Breast epithelium (tissue), 4 donors: ENCODE measurements at regions of chr7 and their contacts with region 1.

Region 1: GRCh38 chr7:68875857-68876256 is 722.4 kb upstream of the AUTS2 start:
- DNase-seq: no peak
- H3K4me3 ChIP-seq: no peak overlapping the region
- H3K27ac ChIP-seq: no peak overlapping the region
- H3K4me1 ChIP-seq: no peaks in the 10 kb centered on the region
- H3K27me3 ChIP-seq: no peaks in the 10 kb centered on the region
- CTCF ChIP-seq: no peak
- POLR2A ChIP-seq: no peak

Region 2: DNA sequence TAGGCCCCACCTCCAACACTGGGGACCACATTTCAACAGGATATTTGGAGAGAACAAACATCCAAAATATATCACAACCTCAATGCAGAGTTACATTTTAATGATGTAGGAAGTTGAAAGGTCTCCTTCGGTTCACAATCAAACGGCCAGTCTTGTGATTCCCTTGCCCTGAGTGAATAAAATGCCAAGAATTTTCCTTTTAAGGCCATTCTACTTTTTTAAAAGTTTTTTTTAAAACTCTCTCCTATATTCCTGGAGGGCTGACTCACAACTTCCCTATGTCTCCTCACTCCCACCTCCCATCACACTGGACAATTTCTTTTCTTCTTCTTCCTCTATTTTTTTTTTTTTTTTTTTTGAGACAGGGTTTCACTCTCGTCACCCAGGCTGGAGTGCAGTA is 28.8 kb after region 1 on chr7:
- intact Hi-C with region 1: loop called (anchors 2 kb)
- DNase-seq: no peak
- H3K4me3 ChIP-seq: no peak overlapping the region
- H3K27ac ChIP-seq: no peak overlapping the region
- H3K4me1 ChIP-seq: no peaks in the 10 kb centered on the region
- H3K27me3 ChIP-seq: no peaks in the 10 kb centered on the region
- CTCF ChIP-seq: no peak
- POLR2A ChIP-seq: no peak

Region 3: GRCh38 chr7:70738151-70738885 is 1862.5 kb after region 1 on chr7:
- intact Hi-C with region 1: no loop called
- DNase-seq: peak in 1 of 2 donors; percentile 74
- H3K4me3 ChIP-seq: peak overlapping the region in 2 of 3 donors; percentile 12 to 30
- H3K27ac ChIP-seq: peak overlapping the region; percentile 27 to 37
- H3K4me1 ChIP-seq: peaks cover 0 to 5% of the 10 kb centered on the region in 2 donors
- H3K27me3 ChIP-seq: no peaks in the 10 kb centered on the region
- CTCF ChIP-seq: peak in 1 of 3 donors; percentile 24
- POLR2A ChIP-seq: no peak